Activated CD8-positive, alpha-beta T cell treated with anti-CD3 and anti-CD28 coated beads for 36 hours (primary cell): ENCODE measurements at regions of chr7 and their contacts with region 1.

Region 1: DNA sequence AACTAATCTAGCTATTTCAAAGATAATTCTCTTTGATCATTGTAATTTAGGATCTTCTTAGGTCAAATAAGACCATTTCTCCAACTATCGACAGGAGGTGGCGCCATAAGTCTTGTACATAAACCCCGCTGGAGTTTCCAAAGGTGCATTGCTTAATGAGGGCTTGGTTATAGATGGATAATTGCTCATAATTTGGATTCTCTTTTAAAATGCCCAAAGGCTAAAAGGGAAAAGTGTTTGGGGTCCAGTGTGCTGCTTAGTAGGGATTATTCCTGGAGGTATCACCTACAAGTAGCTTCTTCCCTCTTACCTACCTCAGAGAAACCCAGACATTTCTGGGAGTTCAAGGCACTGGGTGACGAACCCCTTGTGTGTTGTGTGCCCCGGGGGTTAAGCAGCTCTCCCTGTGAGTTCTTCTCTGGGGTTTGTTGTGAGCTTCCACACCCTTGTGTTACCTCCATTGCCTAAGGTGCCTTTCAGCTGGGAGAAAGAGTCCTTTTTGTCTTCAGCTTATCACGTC is 75.2 kb downstream of the PAXIP1 start:
- DNase-seq: peak; percentile 94
- ATAC-seq: peak; percentile 67
- H3K4me3 Mint-ChIP-seq: peak overlapping the region; percentile 83
- H3K27ac Mint-ChIP-seq: peak overlapping the region; percentile 99
- H3K4me1 Mint-ChIP-seq: peaks cover 20% of the 10 kb centered on the region
- H3K27me3 Mint-ChIP-seq: no peaks in the 10 kb centered on the region
- CTCF ChIP-seq: peak; percentile 87

Region 2: GRCh38 chr7:154892462-154892861 is 35.2 kb before region 1 on chr7:
- CTCF ChIA-PET with region 1: no interaction called
- POLR2A ChIA-PET with region 1: no interaction called
- intact Hi-C with region 1: no loop called
- DNase-seq: no peak
- ATAC-seq: no peak
- H3K4me3 Mint-ChIP-seq: no peak overlapping the region
- H3K27ac Mint-ChIP-seq: no peak overlapping the region
- H3K4me1 Mint-ChIP-seq: no peaks in the 10 kb centered on the region
- H3K27me3 Mint-ChIP-seq: peaks cover 5% of the 10 kb centered on the region
- CTCF ChIP-seq: no peak

Region 3: GRCh38 chr7:154953006-154953684 is 25.5 kb after region 1 on chr7:
- CTCF ChIA-PET with region 1: interaction called, 155 read pairs
- POLR2A ChIA-PET with region 1: interaction called, 3 read pairs
- intact Hi-C with region 1: no loop called
- DNase-seq: peak; percentile 85
- ATAC-seq: no peak
- H3K4me3 Mint-ChIP-seq: no peak overlapping the region
- H3K27ac Mint-ChIP-seq: no peak overlapping the region
- H3K4me1 Mint-ChIP-seq: no peaks in the 10 kb centered on the region
- H3K27me3 Mint-ChIP-seq: no peaks in the 10 kb centered on the region
- CTCF ChIP-seq: peak; percentile 67

Region 4: GRCh38 chr7:154978017-154978416 is 50.3 kb after region 1 on chr7:
- CTCF ChIA-PET with region 1: interaction called, 24 read pairs
- POLR2A ChIA-PET with region 1: no interaction called
- intact Hi-C with region 1: no loop called
- DNase-seq: no peak
- ATAC-seq: no peak
- H3K4me3 Mint-ChIP-seq: no peak overlapping the region
- H3K27ac Mint-ChIP-seq: no peak overlapping the region
- H3K4me1 Mint-ChIP-seq: peaks cover 14% of the 10 kb centered on the region
- H3K27me3 Mint-ChIP-seq: no peaks in the 10 kb centered on the region
- CTCF ChIP-seq: no peak

Region 5: DNA sequence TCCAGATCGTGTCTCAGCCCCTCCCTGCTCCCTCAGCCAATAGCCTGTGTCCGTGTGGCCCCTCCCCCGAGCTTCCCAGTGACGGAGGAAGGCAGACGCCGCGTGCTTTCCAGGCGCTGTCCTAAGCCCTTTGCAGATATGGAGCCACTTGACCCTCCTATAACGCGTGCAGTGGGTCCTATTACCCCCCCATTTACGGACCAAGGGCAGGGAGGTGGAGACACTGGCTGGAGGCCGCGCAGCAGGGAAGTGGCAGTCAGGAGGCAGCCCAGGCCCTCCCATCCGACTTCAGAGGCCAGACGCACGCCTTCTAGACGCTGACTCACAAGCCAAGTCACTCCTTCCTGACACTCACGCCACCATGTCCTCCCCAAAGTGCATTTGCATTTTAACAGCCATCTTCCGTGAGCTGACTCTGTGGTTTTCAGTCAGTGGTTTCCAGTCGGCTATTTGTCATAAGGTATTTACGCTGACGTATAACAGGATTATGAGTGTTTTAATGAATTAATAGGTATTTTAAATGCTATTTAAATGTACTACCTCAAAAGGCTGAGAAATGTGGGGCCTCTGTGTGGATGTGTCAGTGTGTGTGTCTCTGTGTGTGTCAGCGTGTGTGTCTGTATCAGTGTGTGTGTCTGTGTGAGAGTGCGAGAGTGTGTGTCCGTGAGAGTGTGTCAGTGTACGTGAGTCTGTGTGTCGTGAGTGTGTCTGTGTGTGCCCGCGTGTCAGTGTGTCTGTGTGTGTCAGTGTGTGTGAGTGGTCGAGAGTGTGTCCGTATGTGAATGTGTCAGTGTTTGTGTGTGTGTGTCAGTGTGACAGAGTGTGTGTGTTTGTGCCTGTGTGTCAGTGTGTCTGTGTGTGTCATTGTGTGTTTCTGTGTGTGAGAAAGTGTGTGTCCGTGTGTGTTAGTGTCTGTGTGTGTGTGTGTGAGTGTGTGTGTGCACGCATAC is 278.0 kb after region 1 on chr7:
- CTCF ChIA-PET with region 1: interaction called, 5 read pairs
- POLR2A ChIA-PET with region 1: no interaction called
- intact Hi-C with region 1: loop called (anchors 10 kb)
- DNase-seq: peak; percentile 96
- ATAC-seq: peak; percentile 89
- H3K4me3 Mint-ChIP-seq: peak overlapping the region; percentile 82
- H3K27ac Mint-ChIP-seq: peak overlapping the region; percentile 100
- H3K4me1 Mint-ChIP-seq: peaks cover 37% of the 10 kb centered on the region
- H3K27me3 Mint-ChIP-seq: no peaks in the 10 kb centered on the region
- CTCF ChIP-seq: no peak

Region 6: GRCh38 chr7:155344600-155345433 is 417.1 kb after region 1 on chr7:
- CTCF ChIA-PET with region 1: interaction called, 21 read pairs
- POLR2A ChIA-PET with region 1: no interaction called
- intact Hi-C with region 1: no loop called
- DNase-seq: peak; percentile 75
- ATAC-seq: peak; percentile 80
- H3K4me3 Mint-ChIP-seq: peak overlapping the region; percentile 41
- H3K27ac Mint-ChIP-seq: no peak overlapping the region
- H3K4me1 Mint-ChIP-seq: peaks cover 6% of the 10 kb centered on the region
- H3K27me3 Mint-ChIP-seq: peaks cover 18% of the 10 kb centered on the region
- CTCF ChIP-seq: peak; percentile 82

Region 7: GRCh38 chr7:155533827-155534690 is 606.4 kb after region 1 on chr7:
- CTCF ChIA-PET with region 1: interaction called, 10 read pairs
- POLR2A ChIA-PET with region 1: no interaction called
- intact Hi-C with region 1: no loop called
- DNase-seq: peak; percentile 67
- ATAC-seq: peak; percentile 85
- H3K4me3 Mint-ChIP-seq: peak overlapping the region; percentile 53
- H3K27ac Mint-ChIP-seq: no peak overlapping the region
- H3K4me1 Mint-ChIP-seq: peaks cover 9% of the 10 kb centered on the region
- H3K27me3 Mint-ChIP-seq: peaks cover 53% of the 10 kb centered on the region
- CTCF ChIP-seq: peak; percentile 76